B cell (primary cell): ENCODE measurements at regions of chr2 and their contacts with region 1.

Region 1: DNA sequence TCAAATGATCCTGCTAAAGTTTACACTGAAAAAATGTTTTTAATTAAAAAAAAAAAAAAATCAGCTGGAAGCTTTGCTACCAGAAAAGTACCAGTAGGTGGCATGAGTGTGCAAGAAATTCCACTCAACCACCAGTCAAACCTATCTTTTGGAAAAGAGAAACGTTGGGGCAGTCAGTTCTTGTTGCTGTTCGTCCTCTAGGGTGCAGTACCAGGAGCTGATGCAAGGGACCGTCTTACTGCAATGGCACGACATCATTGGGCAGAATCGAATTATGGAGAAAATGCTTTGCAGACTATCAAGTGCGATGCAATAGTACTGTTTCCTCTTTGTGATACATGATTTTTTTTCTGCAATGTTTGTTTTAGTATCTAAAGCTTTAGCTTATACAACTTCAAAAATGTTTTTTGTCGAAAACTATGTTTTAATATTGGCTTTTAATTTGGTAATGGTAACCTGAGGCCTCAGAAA is 18.3 kb downstream of the YPEL5 start:
- DNase-seq: peak; percentile 87
- ATAC-seq: peak; percentile 100
- H3K4me3 ChIP-seq: no peak overlapping the region
- H3K4me3 Mint-ChIP-seq: no peak overlapping the region
- H3K27ac ChIP-seq: no peak overlapping the region
- H3K27ac Mint-ChIP-seq: no peak overlapping the region
- H3K4me1 ChIP-seq: peaks cover 8% of the 10 kb centered on the region in 2 donors
- H3K4me1 Mint-ChIP-seq: peaks cover 16% of the 10 kb centered on the region
- H3K27me3 ChIP-seq: no peaks in the 10 kb centered on the region
- H3K27me3 Mint-ChIP-seq: no peaks in the 10 kb centered on the region
- CTCF ChIP-seq: peak; percentile 85

Region 2: DNA sequence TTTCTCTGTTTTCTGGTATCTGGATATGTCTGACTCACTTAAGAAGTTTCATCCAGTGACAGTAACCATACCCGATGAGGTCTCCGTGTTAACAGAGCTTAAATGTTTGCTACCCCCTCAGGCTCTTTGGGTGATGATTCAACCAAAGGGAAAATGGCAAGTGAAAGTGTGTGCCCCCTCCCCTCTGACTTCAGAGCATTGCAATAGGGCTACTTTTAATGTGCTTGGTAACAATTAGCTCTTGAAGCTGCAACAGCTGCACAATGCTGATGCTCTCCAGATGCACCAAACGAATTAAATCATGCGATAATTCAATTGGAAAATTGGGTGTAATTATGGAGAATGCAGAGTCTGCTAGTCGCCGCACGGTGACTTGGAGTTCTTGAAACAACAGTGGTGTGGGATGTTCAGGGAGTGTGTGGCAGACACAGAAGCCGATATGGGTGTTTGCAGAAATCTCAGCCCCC is 514.4 kb before region 1 on chr2:
- CTCF ChIA-PET with region 1: no interaction called
- POLR2A ChIA-PET with region 1: no interaction called
- intact Hi-C with region 1: no loop called
- DNase-seq: no peak
- ATAC-seq: no peak
- H3K4me3 ChIP-seq: no peak overlapping the region
- H3K4me3 Mint-ChIP-seq: no peak overlapping the region
- H3K27ac ChIP-seq: no peak overlapping the region
- H3K27ac Mint-ChIP-seq: no peak overlapping the region
- H3K4me1 ChIP-seq: no peaks in the 10 kb centered on the region
- H3K4me1 Mint-ChIP-seq: no peaks in the 10 kb centered on the region
- H3K27me3 ChIP-seq: no peaks in the 10 kb centered on the region
- H3K27me3 Mint-ChIP-seq: peaks cover 6% of the 10 kb centered on the region
- CTCF ChIP-seq: no peak

Region 3: DNA sequence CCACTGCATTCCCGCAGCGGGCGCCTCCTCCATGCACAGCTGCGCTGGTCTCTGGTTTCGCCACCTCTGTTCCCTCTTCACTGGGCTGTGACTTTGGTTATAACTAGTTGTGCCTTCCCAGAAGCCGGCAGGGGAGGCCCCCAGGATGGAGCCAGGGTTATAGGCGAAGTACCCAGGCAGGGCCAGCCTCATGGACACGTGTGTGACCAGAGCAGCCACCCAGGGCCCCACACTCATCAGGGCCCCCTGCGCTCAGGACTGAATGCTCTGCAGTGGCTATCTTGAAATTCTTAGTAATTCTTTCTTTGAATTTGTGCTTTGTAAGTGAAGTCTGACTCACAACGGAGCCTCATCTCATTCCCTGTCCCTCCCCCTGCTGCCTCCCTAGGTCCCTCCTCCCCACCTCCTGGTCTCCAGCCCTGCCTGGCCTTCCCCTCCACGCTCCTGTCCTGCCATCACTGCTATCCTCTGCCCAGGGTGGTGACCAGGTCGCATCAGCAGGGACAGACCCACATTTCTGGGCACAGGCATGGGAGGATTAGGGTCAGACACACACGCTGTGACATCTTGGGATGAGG is 28.1 kb after region 1 on chr2:
- CTCF ChIA-PET with region 1: interaction called, 12 read pairs
- POLR2A ChIA-PET with region 1: no interaction called
- intact Hi-C with region 1: no loop called
- DNase-seq: no peak
- ATAC-seq: no peak
- H3K4me3 ChIP-seq: no peak overlapping the region
- H3K4me3 Mint-ChIP-seq: no peak overlapping the region
- H3K27ac ChIP-seq: no peak overlapping the region
- H3K27ac Mint-ChIP-seq: no peak overlapping the region
- H3K4me1 ChIP-seq: peaks cover 4 to 7% of the 10 kb centered on the region in 2 donors
- H3K4me1 Mint-ChIP-seq: peaks cover 6% of the 10 kb centered on the region
- H3K27me3 ChIP-seq: no peaks in the 10 kb centered on the region
- H3K27me3 Mint-ChIP-seq: no peaks in the 10 kb centered on the region
- CTCF ChIP-seq: no peak

Region 4: GRCh38 chr2:30239308-30239985 is 74.4 kb after region 1 on chr2:
- CTCF ChIA-PET with region 1: interaction called, 18 read pairs
- POLR2A ChIA-PET with region 1: no interaction called
- intact Hi-C with region 1: no loop called
- DNase-seq: peak; percentile 79
- ATAC-seq: peak; percentile 71
- H3K4me3 ChIP-seq: no peak overlapping the region
- H3K4me3 Mint-ChIP-seq: peak overlapping the region; percentile 35
- H3K27ac ChIP-seq: peak overlapping the region in 1 of 2 donors; percentile 94
- H3K27ac Mint-ChIP-seq: peak overlapping the region; percentile 62
- H3K4me1 ChIP-seq: peaks cover 73 to 79% of the 10 kb centered on the region in 2 donors
- H3K4me1 Mint-ChIP-seq: peaks cover 87% of the 10 kb centered on the region
- H3K27me3 ChIP-seq: no peaks in the 10 kb centered on the region
- H3K27me3 Mint-ChIP-seq: no peaks in the 10 kb centered on the region
- CTCF ChIP-seq: peak; percentile 88

Region 5: GRCh38 chr2:30683236-30683956 is 518.3 kb after region 1 on chr2:
- CTCF ChIA-PET with region 1: interaction called, 10 read pairs
- POLR2A ChIA-PET with region 1: no interaction called
- intact Hi-C with region 1: no loop called
- DNase-seq: peak; percentile 62
- ATAC-seq: peak; percentile 87
- H3K4me3 ChIP-seq: no peak overlapping the region
- H3K4me3 Mint-ChIP-seq: no peak overlapping the region
- H3K27ac ChIP-seq: peak overlapping the region in 1 of 2 donors; percentile 22
- H3K27ac Mint-ChIP-seq: peak overlapping the region; percentile 82
- H3K4me1 ChIP-seq: peaks cover 6 to 13% of the 10 kb centered on the region in 2 donors
- H3K4me1 Mint-ChIP-seq: peaks cover 12% of the 10 kb centered on the region
- H3K27me3 ChIP-seq: no peaks in the 10 kb centered on the region
- H3K27me3 Mint-ChIP-seq: no peaks in the 10 kb centered on the region
- CTCF ChIP-seq: no peak